Tibial artery (tissue), 4 donors: ENCODE measurements at regions of chr1 and their contacts with region 1.

Region 1: GRCh38 chr1:115337633-115338456 is at the start of gene NGF:
- DNase-seq: peak; percentile 52 to 84
- H3K4me3 ChIP-seq: peak within 1 kb of the TSS; percentile 69 to 72
- H3K27ac ChIP-seq: peak within 1 kb of the TSS; percentile 79
- H3K4me1 ChIP-seq: peaks cover 0 to 75% (median 37%) of the 10 kb centered on the region in 4 donors
- H3K27me3 ChIP-seq: no peaks in the 10 kb centered on the region
- CTCF ChIP-seq: no peak

Region 2: DNA sequence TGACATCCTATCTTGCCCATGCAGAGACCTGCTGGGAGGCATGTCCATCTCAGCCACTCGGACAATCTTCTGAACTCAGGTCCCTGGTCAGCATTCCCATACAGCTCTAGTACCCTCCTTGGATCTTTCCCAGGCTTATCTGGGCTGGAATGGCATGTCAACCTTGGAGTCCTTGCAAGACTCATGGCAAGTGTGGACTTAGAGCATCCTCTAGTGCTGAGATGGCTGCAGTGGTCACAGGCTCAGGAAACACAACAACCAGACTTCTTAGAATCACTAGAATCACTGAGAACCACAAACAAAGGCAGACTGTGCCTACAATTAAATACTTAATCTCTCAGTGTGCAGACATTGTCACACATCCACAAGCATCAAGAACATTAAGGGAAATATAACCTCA is 381.3 kb before region 1 on chr1:
- intact Hi-C with region 1: no loop called
- DNase-seq: no peak
- H3K4me3 ChIP-seq: no peak overlapping the region
- H3K27ac ChIP-seq: no peak overlapping the region
- H3K4me1 ChIP-seq: no peaks in the 10 kb centered on the region
- H3K27me3 ChIP-seq: no peaks in the 10 kb centered on the region
- CTCF ChIP-seq: no peak

Region 3: DNA sequence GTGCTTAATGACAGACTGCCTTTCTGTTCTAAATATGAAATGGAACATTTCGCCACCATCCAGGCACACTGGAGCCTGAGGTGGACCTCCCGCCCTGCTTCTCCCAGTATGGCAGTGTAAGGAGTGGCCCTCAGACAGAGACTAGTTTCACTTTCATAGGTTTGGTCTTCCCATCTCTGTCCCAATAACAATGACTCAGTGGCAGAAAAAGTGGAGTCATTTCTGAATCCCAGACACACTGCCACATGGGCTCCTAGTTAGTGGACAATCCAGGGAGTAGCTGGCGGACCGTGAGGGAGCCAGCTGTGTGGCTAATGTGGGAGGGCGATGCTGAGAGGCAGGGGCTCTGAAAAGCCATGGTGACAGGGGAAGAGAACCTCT is 152.9 kb before region 1 on chr1:
- intact Hi-C with region 1: loop called (anchors 5 kb)
- DNase-seq: peak; percentile 37 to 88
- H3K4me3 ChIP-seq: peak overlapping the region; percentile 27 to 32
- H3K27ac ChIP-seq: peak overlapping the region; percentile 80 to 83
- H3K4me1 ChIP-seq: peaks cover 0 to 51% (median 35%) of the 10 kb centered on the region in 4 donors
- H3K27me3 ChIP-seq: no peaks in the 10 kb centered on the region
- CTCF ChIP-seq: no peak

Region 4: DNA sequence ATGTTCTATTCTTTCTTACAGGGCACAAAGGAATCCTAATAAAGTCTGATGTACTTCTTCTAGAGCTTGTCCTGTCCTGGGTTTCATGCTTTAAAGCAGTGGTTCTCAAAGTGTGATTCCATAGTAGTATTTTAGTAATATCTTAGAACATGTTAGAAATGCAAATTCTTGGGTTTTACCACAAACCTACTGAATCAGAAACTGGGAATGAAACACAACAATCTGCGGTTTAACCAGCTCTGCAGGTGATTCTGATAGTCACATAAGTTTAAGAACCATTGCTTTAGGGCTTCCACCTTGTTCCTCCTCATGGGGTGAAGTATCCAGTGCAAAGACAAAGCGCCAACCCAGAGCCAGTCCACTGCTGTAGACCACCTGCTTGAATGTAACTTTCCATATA is 40.9 kb before region 1 on chr1:
- intact Hi-C with region 1: no loop called
- DNase-seq: no peak
- H3K4me3 ChIP-seq: no peak overlapping the region
- H3K27ac ChIP-seq: no peak overlapping the region
- H3K4me1 ChIP-seq: peaks cover 0 to 22% (median 6%) of the 10 kb centered on the region in 4 donors
- H3K27me3 ChIP-seq: no peaks in the 10 kb centered on the region
- CTCF ChIP-seq: no peak

Region 5: GRCh38 chr1:115430441-115431116 is 92.7 kb after region 1 on chr1:
- intact Hi-C with region 1: loop called (anchors 10 kb)
- DNase-seq: no peak
- H3K4me3 ChIP-seq: no peak overlapping the region
- H3K27ac ChIP-seq: no peak overlapping the region
- H3K4me1 ChIP-seq: peaks cover 0 to 39% (median 19%) of the 10 kb centered on the region in 4 donors
- H3K27me3 ChIP-seq: no peaks in the 10 kb centered on the region
- CTCF ChIP-seq: no peak

Region 6: DNA sequence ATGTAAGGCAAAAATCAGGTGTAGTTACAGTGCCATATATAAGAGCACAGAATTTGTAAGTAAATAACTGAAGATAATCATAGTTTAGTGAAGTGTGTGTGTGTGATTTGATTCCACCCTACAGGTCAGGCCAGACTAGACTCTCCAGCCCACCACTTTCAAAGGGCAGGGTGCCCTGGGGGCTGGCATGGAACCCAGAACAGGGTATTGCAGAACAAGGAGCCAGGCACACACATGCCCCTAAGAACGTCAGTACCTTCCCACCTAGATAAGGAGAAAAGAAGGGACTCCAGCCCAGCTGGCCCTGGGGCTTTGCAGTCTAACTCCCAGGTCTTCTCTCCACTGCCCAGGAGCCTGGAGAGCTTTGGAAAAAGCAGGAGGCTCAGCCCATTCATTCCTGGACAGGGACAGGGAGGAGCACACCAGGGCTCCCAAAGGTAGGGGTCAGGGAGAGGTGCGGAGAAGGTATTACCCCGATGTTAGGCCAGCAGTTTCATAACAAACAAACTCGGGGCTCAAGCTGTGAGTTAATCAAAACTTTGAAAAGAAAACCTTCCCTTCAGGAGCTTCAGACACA is 154.3 kb after region 1 on chr1:
- intact Hi-C with region 1: no loop called
- DNase-seq: no peak
- H3K4me3 ChIP-seq: no peak overlapping the region
- H3K27ac ChIP-seq: no peak overlapping the region
- H3K4me1 ChIP-seq: no peaks in the 10 kb centered on the region
- H3K27me3 ChIP-seq: no peaks in the 10 kb centered on the region
- CTCF ChIP-seq: no peak

Region 7: GRCh38 chr1:115506926-115507589 is 169.2 kb after region 1 on chr1:
- intact Hi-C with region 1: no loop called
- DNase-seq: no peak
- H3K4me3 ChIP-seq: no peak overlapping the region
- H3K27ac ChIP-seq: no peak overlapping the region
- H3K4me1 ChIP-seq: peaks cover 0 to 8% (median 4%) of the 10 kb centered on the region in 4 donors
- H3K27me3 ChIP-seq: no peaks in the 10 kb centered on the region
- CTCF ChIP-seq: no peak

Region 8: DNA sequence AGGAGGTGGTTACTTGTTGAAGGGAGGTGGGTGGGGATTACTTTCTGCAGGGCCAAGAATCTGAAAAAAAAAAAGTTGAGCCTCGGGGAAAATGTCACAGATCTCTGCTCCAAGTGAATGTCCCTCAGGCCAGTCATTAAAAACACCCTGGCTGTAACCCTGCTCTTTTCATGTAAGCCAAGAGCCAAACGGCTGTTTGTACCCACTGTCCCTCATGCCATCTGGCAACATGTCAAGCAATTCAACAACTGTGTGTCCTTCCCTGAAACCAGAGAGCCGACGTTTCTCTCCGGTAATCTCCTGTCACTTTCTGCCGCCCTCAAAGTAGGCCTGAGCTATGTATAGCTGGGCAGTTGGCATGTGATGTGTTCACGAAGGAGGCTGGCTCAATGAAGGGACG is 416.0 kb after region 1 on chr1:
- intact Hi-C with region 1: loop called (anchors 10 kb)
- DNase-seq: peak; percentile 26 to 72
- H3K4me3 ChIP-seq: no peak overlapping the region
- H3K27ac ChIP-seq: peak overlapping the region; percentile 82 to 85
- H3K4me1 ChIP-seq: peaks cover 0 to 90% (median 55%) of the 10 kb centered on the region in 4 donors
- H3K27me3 ChIP-seq: no peaks in the 10 kb centered on the region
- CTCF ChIP-seq: no peak